ENCODE measurements at regions of chr9 and their contacts with region 1.

Region 1: GRCh38 chr9:133103183-133103986 is 17.7 kb downstream of the RALGDS start:
- DNase-seq: peak; percentile 61 to 78
- ATAC-seq: peak; percentile 62 to 81 (median 74)
- H3K4me3 ChIP-seq: no peak overlapping the region
- H3K27ac ChIP-seq: peak overlapping the region in 2 of 10 donors; percentile 30 to 32
- H3K4me1 ChIP-seq: peaks cover 0 to 7% (median 0%) of the 10 kb centered on the region in 9 donors
- H3K27me3 ChIP-seq: no peaks in the 10 kb centered on the region
- CTCF ChIP-seq: peak; percentile 95 to 99 (median 96)

Region 2: DNA sequence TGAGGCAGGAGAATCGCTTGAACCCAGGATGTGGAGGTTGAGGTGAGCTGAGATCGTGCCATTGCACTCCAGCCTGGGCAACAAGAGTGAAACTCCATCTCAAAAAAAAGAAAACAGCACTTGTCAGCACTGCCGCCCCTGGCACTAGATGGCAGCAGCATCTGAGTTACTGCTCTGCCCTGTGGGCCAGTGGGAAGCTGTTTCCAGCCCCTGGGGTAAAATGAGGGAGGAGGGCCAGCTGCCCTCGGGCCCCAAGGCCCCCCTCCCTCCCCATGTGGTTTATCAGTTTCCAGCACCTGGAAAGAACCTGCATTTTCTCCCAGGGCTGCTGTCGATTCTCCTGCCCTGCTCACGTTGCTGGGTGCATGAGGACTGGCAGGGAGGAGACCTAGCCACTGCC is 54.8 kb before region 1 on chr9:
- intact Hi-C with region 1: loop called in 2 of 10 experiments (anchors 10 kb)
- DNase-seq: no peak
- ATAC-seq: peak in 3 of 8 donors; percentile 45 to 66 (median 54)
- H3K4me3 ChIP-seq: no peak overlapping the region
- H3K27ac ChIP-seq: no peak overlapping the region
- H3K4me1 ChIP-seq: peaks cover 0 to 2% (median 0%) of the 10 kb centered on the region in 9 donors
- H3K27me3 ChIP-seq: no peaks in the 10 kb centered on the region
- CTCF ChIP-seq: peak in 7 of 9 donors; percentile 32 to 54 (median 50)

Region 3: DNA sequence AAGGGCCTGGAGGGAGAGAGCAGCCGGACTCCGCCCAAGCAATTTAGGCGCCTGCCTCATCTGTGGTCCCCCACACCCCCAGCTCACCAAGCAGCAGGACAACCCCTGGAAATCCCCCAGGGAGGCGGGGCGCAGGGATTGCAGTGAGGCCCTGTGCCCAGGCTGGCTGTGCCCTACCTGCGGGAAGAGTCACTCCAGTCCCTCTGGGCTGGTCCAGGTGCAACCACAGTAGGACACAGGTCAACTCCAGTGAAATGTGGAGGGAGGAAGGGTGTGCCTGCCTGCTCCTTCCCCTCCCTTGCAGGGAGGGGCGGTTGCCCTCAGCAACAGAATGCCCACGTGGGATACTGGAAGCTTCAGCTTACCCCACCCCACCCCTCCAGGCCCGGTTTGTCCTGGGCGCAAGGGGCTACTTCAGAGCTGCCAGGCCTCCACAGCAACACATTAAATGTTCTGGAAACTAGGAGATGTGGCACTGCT is 149.0 kb after region 1 on chr9:
- intact Hi-C with region 1: no loop called
- DNase-seq: no peak
- ATAC-seq: peak; percentile 34 to 82 (median 70)
- H3K4me3 ChIP-seq: peak overlapping the region in 6 of 10 donors; percentile 14 to 36 (median 21)
- H3K27ac ChIP-seq: peak overlapping the region in 6 of 10 donors; percentile 55 to 65 (median 63)
- H3K4me1 ChIP-seq: peaks cover 5 to 40% (median 20%) of the 10 kb centered on the region in 9 donors
- H3K27me3 ChIP-seq: peaks cover 0 to 4% (median 0%) of the 10 kb centered on the region in 7 donors
- CTCF ChIP-seq: no peak